ENCODE measurements at regions of chr18 and their contacts with region 1.

Region 1: GRCh38 chr18:3245853-3246634 is 1.6 kb upstream of the MYL12A start:
- DNase-seq: peak; percentile 95
- H3K4me3 Mint-ChIP-seq: peak overlapping the region; percentile 98
- H3K27ac Mint-ChIP-seq: peak overlapping the region; percentile 95
- H3K4me1 Mint-ChIP-seq: peaks cover 44% of the 10 kb centered on the region
- H3K27me3 Mint-ChIP-seq: no peaks in the 10 kb centered on the region

Region 2: DNA sequence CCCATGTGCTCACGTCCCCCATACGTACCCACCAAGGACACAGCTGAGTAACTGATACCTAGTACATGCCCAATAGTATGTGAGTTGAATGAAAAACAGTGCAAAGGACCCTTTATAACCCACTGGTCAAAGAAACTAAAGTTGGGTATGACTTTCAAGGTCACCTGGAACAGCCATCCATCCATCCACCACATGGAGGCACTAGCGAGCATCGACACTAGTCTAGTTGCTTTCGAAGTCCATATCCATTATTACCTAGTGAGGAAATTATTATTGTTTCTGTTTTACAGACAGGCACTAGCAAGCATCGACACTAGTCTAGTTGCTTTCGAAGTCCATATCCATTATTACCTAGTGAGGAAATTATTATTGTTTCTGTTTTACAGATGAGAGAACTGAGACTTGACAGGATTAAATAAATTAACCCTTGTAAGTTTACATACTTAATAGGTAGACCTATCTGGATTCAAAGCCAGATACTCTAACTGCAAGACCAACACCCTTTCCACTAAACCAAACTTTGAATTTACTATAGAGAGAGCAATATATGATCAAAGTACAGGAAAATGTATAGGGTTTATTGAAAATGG is 908.4 kb before region 1 on chr18:
- intact Hi-C with region 1: loop called (anchors 5 kb)
- DNase-seq: peak; percentile 81
- H3K4me3 Mint-ChIP-seq: no peak overlapping the region
- H3K27ac Mint-ChIP-seq: no peak overlapping the region
- H3K4me1 Mint-ChIP-seq: peaks cover 5% of the 10 kb centered on the region
- H3K27me3 Mint-ChIP-seq: peaks cover 8% of the 10 kb centered on the region

Region 3: DNA sequence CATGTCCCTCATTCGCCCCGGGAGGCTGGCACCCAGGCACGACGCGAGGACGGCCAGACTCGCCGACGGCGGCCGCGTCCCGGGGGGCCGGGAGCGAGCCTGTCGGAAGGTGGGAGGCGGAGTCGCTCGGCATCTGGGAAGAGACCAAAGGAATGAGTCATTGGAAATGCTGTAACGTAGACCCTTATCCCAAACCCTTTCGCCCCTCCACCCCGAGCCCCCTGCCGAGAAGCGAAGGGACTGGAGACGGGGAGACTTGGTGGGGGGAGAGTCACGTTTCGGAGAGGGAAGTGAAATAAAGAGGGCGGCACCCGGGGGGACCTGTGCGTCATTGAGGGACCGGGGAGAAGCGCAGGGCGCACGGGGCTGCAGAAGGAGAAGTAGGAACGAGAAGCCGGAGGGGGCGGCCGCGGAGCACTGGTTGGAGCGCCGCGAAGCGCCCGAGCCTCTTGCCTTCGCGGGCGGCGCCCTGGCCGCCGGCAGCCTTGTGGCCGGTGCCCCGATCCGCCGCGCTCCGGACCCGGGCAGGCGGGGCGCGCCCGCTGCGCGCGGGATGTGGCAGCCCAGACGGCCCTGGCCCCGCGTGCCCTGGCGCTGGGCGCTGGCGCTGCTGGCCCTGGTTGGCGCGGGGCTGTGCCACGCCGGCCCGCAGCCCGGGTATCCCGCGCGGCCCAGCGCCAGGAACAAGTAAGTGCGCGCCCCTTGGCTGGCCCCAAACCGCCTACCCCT is 399.2 kb before region 1 on chr18 and contains the start of gene EMILIN2:
- intact Hi-C with region 1: loop called (anchors 5 kb)
- DNase-seq: peak; percentile 80
- H3K4me3 Mint-ChIP-seq: peak within 1 kb of the TSS; percentile 88
- H3K27ac Mint-ChIP-seq: peak within 1 kb of the TSS; percentile 89
- H3K4me1 Mint-ChIP-seq: peaks cover 36% of the 10 kb centered on the region
- H3K27me3 Mint-ChIP-seq: peaks cover 49% of the 10 kb centered on the region
- total RNA-seq, gene EMILIN2: 32.4 and 35.5 TPM in 2 replicates

Region 4: GRCh38 chr18:2985628-2986027 is 260.4 kb before region 1 on chr18:
- intact Hi-C with region 1: loop called (anchors 1 kb)
- DNase-seq: peak; percentile 77
- H3K4me3 Mint-ChIP-seq: no peak overlapping the region
- H3K27ac Mint-ChIP-seq: peak overlapping the region; percentile 6
- H3K4me1 Mint-ChIP-seq: peaks cover 65% of the 10 kb centered on the region
- H3K27me3 Mint-ChIP-seq: no peaks in the 10 kb centered on the region

Region 5: GRCh38 chr18:3062798-3063680 is 183.0 kb before region 1 on chr18:
- intact Hi-C with region 1: loop called (anchors 1 kb)
- DNase-seq: peak; percentile 93
- H3K4me3 Mint-ChIP-seq: peak overlapping the region; percentile 62
- H3K27ac Mint-ChIP-seq: peak overlapping the region; percentile 79
- H3K4me1 Mint-ChIP-seq: peaks cover 66% of the 10 kb centered on the region
- H3K27me3 Mint-ChIP-seq: no peaks in the 10 kb centered on the region

Region 6: GRCh38 chr18:3261371-3262246 is 15.6 kb after region 1 on chr18 and contains the start of gene MYL12B:
- intact Hi-C with region 1: loop called (anchors 1 kb)
- DNase-seq: peak; percentile 94
- H3K4me3 Mint-ChIP-seq: peak within 1 kb of the TSS; percentile 89
- H3K27ac Mint-ChIP-seq: peak within 1 kb of the TSS; percentile 98
- H3K4me1 Mint-ChIP-seq: peaks cover 68% of the 10 kb centered on the region
- H3K27me3 Mint-ChIP-seq: no peaks in the 10 kb centered on the region
- total RNA-seq, gene MYL12B: 239 and 245 TPM in 2 replicates

Measured in activated CD4-positive, alpha-beta T cell treated with anti-CD3 and anti-CD28 coated beads, Interleukin-2, amount 10 ng/mL, durations not matched to agents 24 days and 14 days (primary cell).